Tibial artery (tissue), 4 donors: ENCODE measurements at regions of chr22 and their contacts with region 1.

Region 1: DNA sequence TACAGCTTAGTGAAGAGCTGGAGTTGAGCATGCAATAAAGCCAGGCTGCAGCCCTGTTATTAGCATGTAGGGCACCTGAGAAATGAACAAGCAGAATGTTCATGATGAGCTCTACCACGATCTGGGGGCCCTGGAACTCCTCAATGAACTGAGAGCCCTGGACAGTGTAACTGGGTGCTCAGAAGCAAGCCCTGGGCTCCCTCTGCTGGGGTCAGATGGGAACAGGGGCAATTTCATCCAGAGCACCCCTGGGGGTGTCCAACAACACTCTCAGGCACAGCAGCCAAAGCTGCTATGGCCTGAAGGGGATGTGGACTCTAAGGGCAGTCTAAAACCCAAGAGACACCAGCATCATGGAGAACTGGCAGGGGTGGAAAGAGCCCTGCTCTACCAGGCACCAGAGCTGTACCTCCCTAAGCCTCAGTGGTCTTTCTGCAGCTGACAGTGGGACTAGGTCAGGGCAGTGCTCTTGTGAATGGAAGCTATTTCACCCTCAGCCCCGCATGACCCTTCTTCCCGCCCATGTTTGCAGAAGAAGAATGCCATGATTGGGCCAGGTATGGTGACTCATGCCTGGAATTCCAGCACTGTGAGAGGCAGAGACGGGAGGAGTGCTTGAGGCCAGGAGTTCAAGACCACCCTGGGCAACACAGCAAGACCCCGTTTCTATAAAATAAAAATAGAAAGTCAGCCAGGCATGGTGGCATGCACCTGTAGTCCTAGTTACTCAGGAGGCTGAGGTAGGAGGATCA is 28.9 kb downstream of the THOC5 start:
- DNase-seq: no peak
- H3K4me3 ChIP-seq: no peak overlapping the region
- H3K27ac ChIP-seq: no peak overlapping the region
- H3K4me1 ChIP-seq: no peaks in the 10 kb centered on the region
- H3K27me3 ChIP-seq: no peaks in the 10 kb centered on the region
- CTCF ChIP-seq: peak in 1 of 2 experiments; percentile 11

Region 2: DNA sequence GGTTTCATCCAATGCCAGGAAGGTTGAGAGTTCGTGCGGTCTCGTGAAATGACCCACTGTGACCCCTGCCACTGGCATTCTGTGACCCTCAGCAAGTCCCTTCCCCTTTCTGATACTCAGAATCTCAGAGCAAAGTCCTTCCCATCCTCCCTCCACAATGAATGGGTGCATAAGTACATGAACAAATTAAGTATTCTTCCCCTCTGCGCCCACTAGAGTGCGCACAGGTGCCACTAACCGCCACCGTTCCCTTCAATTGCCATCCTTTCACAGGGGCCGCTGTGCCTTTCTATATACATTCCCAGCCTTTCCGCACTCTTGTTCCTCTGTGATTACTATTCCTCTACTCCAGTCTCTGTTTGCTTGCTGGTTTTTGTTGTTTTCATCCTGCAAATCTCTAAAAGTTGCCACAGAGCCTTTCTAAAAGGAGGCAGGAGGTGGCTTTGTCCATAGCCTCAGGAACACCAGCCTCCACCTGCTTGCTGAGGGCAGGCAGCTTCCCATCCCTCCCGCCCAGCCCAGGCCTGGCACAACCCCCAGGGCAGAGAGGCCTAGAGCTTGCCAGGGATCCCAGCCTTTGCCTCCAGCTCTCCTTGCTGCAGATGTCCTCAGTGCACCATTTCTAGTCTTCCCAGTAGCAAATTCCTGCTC is 129.6 kb before region 1 on chr22:
- intact Hi-C with region 1: loop called (anchors 10 kb)
- DNase-seq: peak; percentile 71 to 72
- H3K4me3 ChIP-seq: no peak overlapping the region
- H3K27ac ChIP-seq: no peak overlapping the region
- H3K4me1 ChIP-seq: peaks cover 0 to 4% (median 0%) of the 10 kb centered on the region in 4 donors
- H3K27me3 ChIP-seq: no peaks in the 10 kb centered on the region
- CTCF ChIP-seq: peak; percentile 62 to 80

Region 3: GRCh38 chr22:29580200-29580810 is 55.7 kb after region 1 on chr22:
- intact Hi-C with region 1: no loop called
- DNase-seq: no peak
- H3K4me3 ChIP-seq: peak overlapping the region; percentile 66 to 71
- H3K27ac ChIP-seq: peak overlapping the region; percentile 40 to 65
- H3K4me1 ChIP-seq: peaks cover 0 to 17% (median 7%) of the 10 kb centered on the region in 4 donors
- H3K27me3 ChIP-seq: no peaks in the 10 kb centered on the region
- CTCF ChIP-seq: no peak

Region 4: DNA sequence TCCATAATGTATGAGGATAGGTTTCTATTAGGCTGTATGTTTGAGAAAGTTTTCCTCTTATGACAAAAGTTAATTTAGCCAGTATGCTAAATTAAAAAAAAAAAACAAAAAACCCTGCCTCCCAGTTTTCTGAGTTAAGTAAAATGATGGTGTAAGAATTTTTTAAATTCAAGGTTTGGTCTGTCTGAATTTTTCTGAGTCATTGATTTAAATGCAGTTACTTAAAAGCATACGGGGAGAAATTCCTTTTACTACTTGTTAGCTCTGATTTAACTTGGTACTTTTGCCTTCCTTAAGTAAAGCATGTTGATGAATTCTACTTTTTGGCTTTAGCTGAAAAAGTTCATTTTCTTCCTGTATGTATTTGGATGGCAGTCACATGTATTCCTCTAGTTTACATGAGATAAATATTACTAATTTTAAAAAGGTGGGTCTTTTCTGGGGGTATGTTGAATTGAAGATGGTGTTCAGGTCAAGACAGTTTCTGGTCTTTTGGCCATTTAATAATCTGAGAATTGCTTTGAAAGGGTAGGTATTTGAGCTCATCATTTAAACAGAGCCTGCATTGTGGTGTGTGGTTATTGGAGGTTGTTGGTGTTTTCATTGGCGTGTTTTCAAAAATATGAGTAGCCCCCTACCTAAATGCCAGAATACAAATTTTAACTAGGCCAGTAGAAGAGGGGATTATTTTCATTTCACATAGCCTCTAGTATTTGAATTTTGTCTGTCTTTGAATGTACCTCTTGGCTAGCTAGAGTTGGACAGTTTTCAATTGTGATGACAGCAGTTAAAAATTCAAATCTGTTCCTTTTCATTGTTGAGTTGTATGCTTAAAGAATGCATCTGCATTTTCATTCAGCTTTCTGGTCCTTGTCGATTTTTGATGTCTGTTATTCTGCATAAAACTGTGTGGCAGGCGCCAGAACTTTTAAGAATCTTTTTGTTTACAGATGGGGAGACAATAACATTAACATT is 423.1 kb after region 1 on chr22:
- intact Hi-C with region 1: no loop called
- DNase-seq: no peak
- H3K4me3 ChIP-seq: no peak overlapping the region
- H3K27ac ChIP-seq: no peak overlapping the region
- H3K4me1 ChIP-seq: peaks cover 0 to 58% (median 9%) of the 10 kb centered on the region in 4 donors
- H3K27me3 ChIP-seq: no peaks in the 10 kb centered on the region
- CTCF ChIP-seq: no peak